ENCODE measurements at regions of chr2 and their contacts with region 1.

Region 1: GRCh38 chr2:164560181-164560792 is 61.0 kb downstream of the GRB14 start:
- DNase-seq: peak; percentile 49
- ATAC-seq: peak; percentile 26; the same call in 1 of the 3 replicates
- H3K4me3 ChIP-seq: no peak overlapping the region
- H3K27ac ChIP-seq: no peak overlapping the region
- H3K4me1 ChIP-seq: no peaks in the 10 kb centered on the region
- H3K27me3 ChIP-seq: no peaks in the 10 kb centered on the region
- CTCF ChIP-seq: peak; percentile 74
- EP300 ChIP-seq: no peak
- POLR2A ChIP-seq: no peak
- RAD21 ChIP-seq: peak; percentile 42; the same call in 1 of the 2 replicates

Region 2: GRCh38 chr2:164523009-164523408 is 37.3 kb before region 1 on chr2:
- CTCF ChIA-PET with region 1: no interaction called
- POLR2A ChIA-PET with region 1: no interaction called
- in situ Hi-C with region 1: no loop called
- intact Hi-C with region 1: loop called (anchors 1 kb)
- DNase-seq: no peak
- ATAC-seq: no peak
- H3K4me3 ChIP-seq: no peak overlapping the region
- H3K27ac ChIP-seq: no peak overlapping the region
- H3K4me1 ChIP-seq: no peaks in the 10 kb centered on the region
- H3K27me3 ChIP-seq: no peaks in the 10 kb centered on the region
- CTCF ChIP-seq: no peak
- EP300 ChIP-seq: no peak
- POLR2A ChIP-seq: no peak
- RAD21 ChIP-seq: no peak

Region 3: DNA sequence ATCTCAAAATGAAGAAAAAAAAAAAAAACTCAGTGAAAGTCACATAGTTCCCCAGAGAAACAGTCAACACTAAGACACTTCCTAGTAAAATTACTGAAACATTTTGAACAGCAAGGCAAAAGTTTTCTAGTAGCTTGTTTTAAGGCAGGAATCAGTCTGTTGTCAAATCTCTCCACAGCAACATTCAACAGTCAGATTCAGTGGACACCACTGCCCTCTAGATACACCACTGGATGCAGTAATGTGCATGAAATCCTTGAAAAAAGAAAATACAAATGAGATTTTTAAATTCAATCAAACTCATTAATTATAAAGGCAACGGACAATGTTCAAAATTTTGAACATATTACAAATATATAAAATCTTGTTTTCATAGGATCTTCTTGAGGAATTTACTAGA is 14.6 kb after region 1 on chr2:
- CTCF ChIA-PET with region 1: no interaction called
- POLR2A ChIA-PET with region 1: no interaction called
- in situ Hi-C with region 1: no loop called
- intact Hi-C with region 1: loop called (anchors 2 kb)
- DNase-seq: peak; percentile 13
- ATAC-seq: peak; percentile 77
- H3K4me3 ChIP-seq: no peak overlapping the region
- H3K27ac ChIP-seq: no peak overlapping the region
- H3K4me1 ChIP-seq: peaks cover 20% of the 10 kb centered on the region
- H3K27me3 ChIP-seq: no peaks in the 10 kb centered on the region
- CTCF ChIP-seq: peak; percentile 31; the same call in 1 of the 2 replicates
- EP300 ChIP-seq: no peak
- POLR2A ChIP-seq: no peak
- RAD21 ChIP-seq: no peak

Region 4: GRCh38 chr2:164717000-164717803 is 156.9 kb after region 1 on chr2:
- CTCF ChIA-PET with region 1: interaction called, 29 read pairs
- POLR2A ChIA-PET with region 1: no interaction called
- in situ Hi-C with region 1: loop called (anchors 5 kb)
- intact Hi-C with region 1: loop called (anchors 1 kb)
- DNase-seq: peak; percentile 50
- ATAC-seq: no peak
- H3K4me3 ChIP-seq: no peak overlapping the region
- H3K27ac ChIP-seq: peak overlapping the region; percentile 20
- H3K4me1 ChIP-seq: peaks cover 48% of the 10 kb centered on the region
- H3K27me3 ChIP-seq: no peaks in the 10 kb centered on the region
- CTCF ChIP-seq: peak; percentile 59
- EP300 ChIP-seq: no peak
- POLR2A ChIP-seq: no peak
- RAD21 ChIP-seq: peak; percentile 70; the same call in 1 of the 2 replicates

Region 5: GRCh38 chr2:164917296-164917903 is 357.1 kb after region 1 on chr2:
- CTCF ChIA-PET with region 1: no interaction called
- POLR2A ChIA-PET with region 1: no interaction called
- in situ Hi-C with region 1: no loop called
- intact Hi-C with region 1: loop called (anchors 10 kb)
- DNase-seq: peak; percentile 74
- ATAC-seq: peak; percentile 61
- H3K4me3 ChIP-seq: no peak overlapping the region
- H3K27ac ChIP-seq: no peak overlapping the region
- H3K4me1 ChIP-seq: peaks cover 56% of the 10 kb centered on the region
- H3K27me3 ChIP-seq: no peaks in the 10 kb centered on the region
- CTCF ChIP-seq: peak; percentile 90
- EP300 ChIP-seq: 0 out of 4 replicates have a peak, but pooled peaks of 1 of the 2 experiments have one; percentile 5
- POLR2A ChIP-seq: no peak
- RAD21 ChIP-seq: peak; percentile 93